Panc1 (cell line): ENCODE measurements at regions of chr16 and their contacts with region 1.

Region 1: DNA sequence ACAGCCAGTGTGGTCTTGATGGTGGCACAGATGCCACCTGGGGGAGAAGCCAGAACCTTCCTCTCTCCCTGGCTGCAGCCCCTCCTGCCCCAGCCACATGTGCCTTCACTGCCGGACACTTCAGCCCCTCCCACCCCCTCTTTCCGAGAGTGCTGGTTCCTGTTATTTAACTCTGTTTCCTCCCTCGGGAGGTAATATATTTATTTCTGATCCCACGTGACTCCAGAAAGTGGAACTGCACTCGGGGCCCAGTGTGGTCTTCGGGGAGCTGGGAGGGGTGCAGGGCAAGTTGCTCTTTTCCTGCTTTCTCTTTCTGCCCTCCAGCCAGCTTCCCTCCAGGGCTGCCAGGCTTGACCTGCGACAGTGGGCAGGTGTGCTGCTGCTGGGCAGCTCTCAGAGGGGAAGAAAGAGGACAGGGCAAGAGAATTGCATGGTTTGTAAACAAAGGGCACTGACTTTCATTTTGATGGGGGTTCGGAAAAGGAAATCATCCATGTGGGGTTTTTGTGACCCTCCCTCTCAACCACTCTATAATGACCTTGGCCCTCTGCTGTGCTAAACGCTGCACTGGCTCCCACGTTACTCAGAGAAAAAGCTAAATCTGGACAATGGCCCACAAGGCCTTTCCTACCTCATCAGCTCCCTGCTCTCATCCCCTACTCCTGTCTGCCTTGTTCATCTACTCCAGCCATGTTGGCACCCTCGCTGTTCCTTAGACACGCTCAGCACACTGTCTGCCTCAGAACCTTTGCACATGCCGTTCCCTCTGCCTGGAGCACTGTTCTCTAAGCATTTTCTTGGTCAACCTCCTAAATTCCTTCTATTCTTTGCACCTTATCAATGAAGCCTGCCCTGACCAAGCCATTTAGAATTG is 8.2 kb upstream of the CIITA start:
- DNase-seq: no peak
- ATAC-seq: no peak
- H3K4me3 ChIP-seq: no peak overlapping the region
- H3K27ac ChIP-seq: no peak overlapping the region
- H3K4me1 ChIP-seq: no peaks in the 10 kb centered on the region
- H3K27me3 ChIP-seq: peaks cover 6% of the 10 kb centered on the region
- CTCF ChIP-seq: no peak

Region 2: GRCh38 chr16:10836174-10836853 is 32.5 kb before region 1 on chr16:
- CTCF ChIA-PET with region 1: no interaction called
- POLR2A ChIA-PET with region 1: no interaction called
- in situ Hi-C with region 1: no loop called
- intact Hi-C with region 1: loop called (anchors 2 kb)
- DNase-seq: no peak
- ATAC-seq: no peak
- H3K4me3 ChIP-seq: no peak overlapping the region
- H3K27ac ChIP-seq: no peak overlapping the region
- H3K4me1 ChIP-seq: no peaks in the 10 kb centered on the region
- H3K27me3 ChIP-seq: peaks cover 3% of the 10 kb centered on the region; the same call in 1 of the 2 replicates
- CTCF ChIP-seq: no peak

Region 3: DNA sequence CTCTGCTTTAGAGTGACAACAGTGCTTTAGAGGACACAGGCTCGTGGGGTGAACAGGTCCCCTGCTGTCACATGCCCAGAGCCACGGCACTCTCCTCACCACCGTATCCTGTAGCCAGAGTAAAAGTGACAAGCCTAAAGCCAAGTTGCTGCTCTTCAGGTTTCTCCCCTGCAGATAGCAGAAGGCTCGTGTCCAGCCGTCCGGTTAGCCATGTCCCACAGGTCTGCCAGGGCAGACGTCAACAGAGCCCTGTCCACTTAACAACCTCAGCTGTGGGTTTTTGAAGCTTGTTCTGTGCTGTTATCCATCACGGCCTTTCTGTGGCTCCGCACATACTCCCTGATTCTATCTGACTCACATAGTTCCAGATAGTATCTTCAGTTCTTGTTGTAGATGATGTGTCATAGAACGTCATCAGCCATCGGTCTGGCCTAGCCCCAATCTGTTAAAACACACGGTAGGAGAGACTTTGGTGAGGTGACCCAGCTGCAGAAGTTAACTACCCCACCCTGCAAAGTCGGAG is 286.5 kb after region 1 on chr16:
- CTCF ChIA-PET with region 1: no interaction called
- POLR2A ChIA-PET with region 1: no interaction called
- in situ Hi-C with region 1: no loop called
- intact Hi-C with region 1: no loop called
- DNase-seq: no peak
- ATAC-seq: peak; percentile 78
- H3K4me3 ChIP-seq: no peak overlapping the region
- H3K27ac ChIP-seq: no peak overlapping the region
- H3K4me1 ChIP-seq: peaks cover 10% of the 10 kb centered on the region; the same call in 1 of the 2 replicates
- H3K27me3 ChIP-seq: no peaks in the 10 kb centered on the region
- CTCF ChIP-seq: no peak